GM10248 (cell line): ENCODE measurements at regions of chr11 and their contacts with region 1.

Region 1: DNA sequence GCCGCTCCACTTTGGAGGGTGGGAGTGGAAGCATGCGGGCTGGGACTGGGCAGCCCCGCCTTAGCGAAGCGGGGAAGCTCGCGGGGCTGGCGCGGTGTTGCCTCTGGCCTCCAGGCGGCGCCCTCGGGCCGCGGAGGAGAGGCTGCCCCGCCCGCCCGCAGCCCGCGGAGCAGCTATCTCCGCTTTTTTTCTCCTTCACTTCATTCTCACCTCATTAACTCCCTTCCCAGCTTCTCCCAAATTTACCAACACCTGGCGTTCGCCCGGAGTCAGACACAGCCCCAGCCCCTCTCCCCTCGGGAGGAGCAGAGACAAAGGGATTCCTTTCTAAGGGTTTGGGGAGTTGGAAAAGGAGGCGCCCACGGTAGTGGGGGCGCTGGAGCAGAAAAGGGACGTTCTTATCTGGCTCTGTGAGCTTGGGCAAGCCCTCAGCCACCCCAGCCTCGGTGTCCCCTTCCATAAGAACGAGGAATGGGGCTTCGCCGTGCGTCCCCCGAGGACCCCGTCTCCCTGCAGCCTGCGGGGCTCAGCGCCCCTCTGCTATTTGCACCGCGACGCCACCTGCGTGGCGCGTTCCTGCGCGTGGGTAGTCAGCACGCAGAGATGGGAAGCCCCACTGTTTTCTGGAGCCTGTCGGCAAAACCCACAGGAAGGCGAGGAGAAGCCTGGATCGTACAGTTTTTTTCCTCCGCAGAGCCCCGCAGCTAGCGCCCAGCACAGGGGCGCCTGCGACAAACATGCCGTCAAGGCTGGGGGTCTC is 1.5 kb upstream of the WNT11 start:
- DNase-seq: peak; percentile 91
- CTCF ChIP-seq: peak; percentile 93

Region 2: GRCh38 chr11:75896843-75897419 is 310.9 kb before region 1 on chr11:
- CTCF ChIA-PET with region 1: interaction called, 16 read pairs
- POLR2A ChIA-PET with region 1: no interaction called
- DNase-seq: no peak
- CTCF ChIP-seq: peak; percentile 31

Region 3: GRCh38 chr11:75938543-75938942 is 269.3 kb before region 1 on chr11:
- CTCF ChIA-PET with region 1: no interaction called
- POLR2A ChIA-PET with region 1: no interaction called
- DNase-seq: no peak
- CTCF ChIP-seq: no peak

Region 4: GRCh38 chr11:76193219-76193618 is 14.6 kb before region 1 on chr11:
- CTCF ChIA-PET with region 1: interaction called, 60 read pairs
- POLR2A ChIA-PET with region 1: no interaction called
- DNase-seq: no peak
- CTCF ChIP-seq: no peak

Region 5: GRCh38 chr11:76235233-76236091 is 27.6 kb after region 1 on chr11:
- CTCF ChIA-PET with region 1: interaction called, 64 read pairs
- POLR2A ChIA-PET with region 1: interaction called, 4 read pairs
- DNase-seq: peak; percentile 95
- CTCF ChIP-seq: no peak

Region 6: DNA sequence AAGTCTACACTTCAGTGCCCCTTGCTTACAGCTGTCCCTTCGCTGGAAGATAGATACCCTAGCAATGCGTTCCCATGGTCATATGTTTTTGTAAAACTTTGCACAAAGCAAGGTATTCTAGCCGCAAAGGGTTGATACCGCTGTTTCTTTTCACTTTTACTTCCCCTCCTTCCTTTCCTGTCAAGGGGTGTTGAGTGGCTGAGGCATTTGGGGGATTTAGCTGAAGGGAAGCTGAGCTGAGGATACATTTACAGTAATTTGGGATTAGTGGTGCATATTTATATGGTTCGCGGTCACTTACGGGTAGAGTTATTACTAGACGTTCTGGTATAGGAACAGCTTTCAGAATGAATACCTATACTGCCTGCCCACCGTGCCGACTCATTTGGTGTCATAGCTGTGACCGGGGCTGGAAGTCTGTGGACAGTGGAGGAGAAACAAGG is 85.4 kb after region 1 on chr11:
- CTCF ChIA-PET with region 1: interaction called, 16 read pairs
- POLR2A ChIA-PET with region 1: no interaction called
- DNase-seq: peak; percentile 40
- CTCF ChIP-seq: no peak

Region 7: GRCh38 chr11:76318744-76319384 is 111.0 kb after region 1 on chr11:
- CTCF ChIA-PET with region 1: interaction called, 296 read pairs
- POLR2A ChIA-PET with region 1: no interaction called
- DNase-seq: peak; percentile 88
- CTCF ChIP-seq: peak; percentile 95